ENCODE measurements at regions of chr20 and their contacts with region 1.

Region 1: GRCh38 chr20:48783533-48784272 is 44.1 kb downstream of the PREX1 start:
- DNase-seq: peak; percentile 27
- H3K4me3 Mint-ChIP-seq: no peak overlapping the region
- H3K27ac Mint-ChIP-seq: no peak overlapping the region
- H3K4me1 Mint-ChIP-seq: peaks cover 41% of the 10 kb centered on the region
- H3K27me3 Mint-ChIP-seq: peaks cover 2% of the 10 kb centered on the region

Region 2: GRCh38 chr20:48738399-48739304 is 45.1 kb before region 1 on chr20:
- intact Hi-C with region 1: loop called (anchors 1 kb)
- DNase-seq: peak; percentile 70
- H3K4me3 Mint-ChIP-seq: peak overlapping the region; percentile 62
- H3K27ac Mint-ChIP-seq: peak overlapping the region; percentile 89
- H3K4me1 Mint-ChIP-seq: peaks cover 54% of the 10 kb centered on the region
- H3K27me3 Mint-ChIP-seq: no peaks in the 10 kb centered on the region

Region 3: DNA sequence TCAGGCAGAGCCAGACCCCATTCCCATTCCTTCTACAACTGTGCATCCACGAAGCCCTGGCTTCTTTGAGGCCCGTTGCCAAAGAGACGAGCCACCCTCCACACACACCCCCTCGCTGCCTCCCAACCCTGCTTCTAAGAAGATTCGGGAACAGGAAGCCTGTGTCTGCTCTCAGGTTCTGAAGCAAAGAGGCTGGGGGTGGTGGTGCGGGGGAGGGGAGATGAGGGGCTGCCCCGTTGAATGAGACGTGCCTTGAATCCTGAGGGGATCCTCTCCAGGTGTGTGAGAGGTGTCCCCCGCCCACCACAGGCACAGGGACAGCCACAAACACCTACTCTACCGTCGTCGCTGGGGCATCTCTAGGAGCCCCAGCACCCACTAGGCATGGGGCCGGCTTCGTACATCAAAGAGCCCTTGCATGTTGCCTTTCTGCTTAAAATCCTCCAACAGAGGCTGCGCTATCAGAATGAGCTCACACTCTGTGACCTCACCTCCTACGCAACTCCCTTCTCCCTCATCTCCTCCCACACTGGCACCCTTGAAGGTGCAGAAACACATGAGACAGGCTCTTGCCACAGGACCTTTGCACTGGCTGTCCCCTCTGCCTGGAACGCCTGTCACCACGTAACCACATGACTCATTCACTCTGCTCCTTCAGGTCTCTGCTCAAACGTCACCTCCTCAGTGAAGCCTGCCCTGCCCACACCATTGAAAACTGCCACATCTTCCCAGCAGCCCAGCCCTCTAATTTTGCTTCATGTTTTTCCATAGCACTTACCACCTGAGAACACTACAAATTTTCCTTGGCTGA is 14.4 kb before region 1 on chr20:
- intact Hi-C with region 1: loop called (anchors 1 kb)
- DNase-seq: peak; percentile 59
- H3K4me3 Mint-ChIP-seq: peak overlapping the region; percentile 43
- H3K27ac Mint-ChIP-seq: peak overlapping the region; percentile 82
- H3K4me1 Mint-ChIP-seq: peaks cover 69% of the 10 kb centered on the region
- H3K27me3 Mint-ChIP-seq: no peaks in the 10 kb centered on the region

Region 4: DNA sequence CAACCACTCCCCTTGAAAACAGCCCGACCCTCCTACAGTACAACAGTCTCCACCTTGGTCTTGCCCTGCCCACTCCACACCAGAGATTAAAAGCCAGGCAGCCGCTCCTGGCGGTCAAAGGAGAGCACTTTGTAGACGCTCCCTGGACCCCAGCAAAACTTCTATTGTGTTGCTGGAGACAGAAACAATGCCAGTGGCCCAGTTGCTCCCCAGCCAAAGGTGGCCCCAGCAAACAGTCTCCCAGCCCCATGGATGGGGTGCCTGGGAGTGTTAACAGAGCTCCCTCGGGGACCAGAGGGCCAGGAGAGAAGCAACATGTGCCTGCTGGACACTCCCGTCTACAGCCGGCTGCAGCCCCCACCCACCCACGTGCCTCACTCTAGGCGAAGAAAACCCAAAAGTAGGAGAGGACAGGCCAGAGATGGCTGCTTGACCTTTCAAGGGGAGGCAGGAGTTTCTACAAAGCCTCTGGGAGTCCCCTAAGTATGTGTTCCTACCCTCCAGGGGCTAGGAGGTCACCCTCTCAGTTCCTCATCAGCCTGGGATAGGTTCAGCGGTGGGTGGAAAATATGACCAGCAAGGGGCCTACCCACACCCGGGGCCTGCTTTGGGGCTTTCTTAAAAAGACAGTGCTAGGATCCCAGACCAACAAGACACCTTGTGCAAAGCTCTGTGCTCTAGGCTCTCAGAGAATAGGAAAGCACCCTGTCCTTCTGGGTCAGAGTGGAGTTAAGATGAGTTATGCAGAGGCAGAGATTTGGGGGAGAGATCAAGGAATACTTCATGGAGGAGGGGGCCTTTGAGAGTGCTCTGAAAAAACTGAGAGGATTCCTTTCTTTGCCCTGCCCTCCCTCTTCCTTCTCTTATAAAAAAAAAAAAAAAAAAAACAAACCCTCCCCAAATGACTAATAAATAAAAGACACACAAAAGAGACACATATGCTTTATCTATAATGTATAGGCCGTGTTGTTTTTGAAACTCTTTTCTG is 63.1 kb after region 1 on chr20:
- intact Hi-C with region 1: loop called (anchors 1 kb)
- DNase-seq: no peak
- H3K4me3 Mint-ChIP-seq: no peak overlapping the region
- H3K27ac Mint-ChIP-seq: peak overlapping the region; percentile 93
- H3K4me1 Mint-ChIP-seq: peaks cover 27% of the 10 kb centered on the region
- H3K27me3 Mint-ChIP-seq: peaks cover 14% of the 10 kb centered on the region

Region 5: DNA sequence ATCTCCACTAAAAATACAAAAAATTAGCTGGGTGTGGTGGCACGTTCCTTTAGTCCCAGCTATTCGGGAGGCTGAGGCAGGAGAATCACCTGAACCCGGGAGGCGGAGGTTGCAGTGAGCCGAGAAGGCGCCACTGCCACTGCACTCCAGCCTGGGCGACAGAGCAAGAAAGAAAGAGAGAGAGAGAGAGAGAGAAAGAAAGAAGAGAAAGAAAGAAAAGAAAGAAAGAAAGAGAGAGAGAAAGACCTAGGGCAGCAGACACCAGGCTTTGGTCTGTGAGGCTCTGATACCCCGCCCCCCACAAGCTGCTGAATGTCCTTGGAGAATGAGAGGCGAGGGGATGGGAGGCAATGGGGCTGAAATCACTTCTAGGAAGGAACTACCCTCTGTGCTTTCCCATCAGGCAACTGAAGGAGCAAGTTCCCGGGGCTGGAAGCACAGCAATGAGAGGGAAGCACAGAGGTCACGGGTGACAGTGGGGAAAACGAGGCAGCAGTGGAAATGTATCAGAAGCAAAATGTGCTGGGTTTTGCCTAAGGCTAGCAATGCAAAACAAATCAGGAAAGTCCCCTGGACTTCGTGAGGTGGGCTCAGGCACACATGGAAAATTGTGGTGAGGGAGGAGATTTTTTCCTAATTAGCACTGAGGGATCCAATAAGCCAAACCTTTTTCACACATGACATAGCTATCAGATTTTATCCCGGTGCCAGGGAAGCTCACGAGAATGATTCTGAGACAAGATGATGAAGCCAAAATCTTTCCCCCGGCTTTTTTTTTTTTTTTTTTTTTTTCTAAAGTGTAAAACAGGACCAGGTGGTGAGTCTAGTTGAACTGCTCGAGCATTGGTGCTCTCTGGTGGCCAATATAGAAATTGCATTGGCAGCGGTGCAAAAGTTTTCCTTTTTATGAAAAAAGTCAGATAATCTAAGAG is 120.9 kb after region 1 on chr20:
- intact Hi-C with region 1: loop called (anchors 2 kb)
- DNase-seq: peak; percentile 54
- H3K4me3 Mint-ChIP-seq: no peak overlapping the region
- H3K27ac Mint-ChIP-seq: no peak overlapping the region
- H3K4me1 Mint-ChIP-seq: peaks cover 13% of the 10 kb centered on the region
- H3K27me3 Mint-ChIP-seq: peaks cover 3% of the 10 kb centered on the region

Measured in activated T-helper 2 cell treated with anti-CD3 and anti-CD28 coated beads, Interferon-gamma antibody, Interleukin-2, Interleukin-4, amounts not matched to agents 10 μg/mL and 5 μg/mL and 100 μg/mL, durations not matched to agents 14 hours and 24 hours and 36 hours (primary cell).